Posterior cingulate gyrus (tissue), 11 donors: ENCODE measurements at regions of chr12 and their contacts with region 1.

Region 1: GRCh38 chr12:56518570-56518969 is 3.0 kb upstream of the RBMS2 start:
- DNase-seq: no peak

Region 2: GRCh38 chr12:56546680-56547079 is 28.1 kb after region 1 on chr12:
- intact Hi-C with region 1: no loop called
- DNase-seq: no peak

Region 3: GRCh38 chr12:56571126-56571525 is 52.6 kb after region 1 on chr12:
- intact Hi-C with region 1: loop called (anchors 1 kb)
- DNase-seq: no peak

Region 4: GRCh38 chr12:56636675-56637540 is 118.3 kb after region 1 on chr12:
- intact Hi-C with region 1: loop called (anchors 2 kb)
- DNase-seq: peak; percentile 87 to 99 (median 95)